Colonic mucosa (tissue), 4 donors: ENCODE measurements at regions of chr1 and their contacts with region 1.

Region 1: GRCh38 chr1:27603681-27604578 is at the start of gene AHDC1:
- DNase-seq: peak; percentile 93
- H3K4me3 ChIP-seq: peak within 1 kb of the TSS; percentile 95
- H3K27ac ChIP-seq: peak within 1 kb of the TSS; percentile 84
- H3K4me1 ChIP-seq: peaks cover 5% of the 10 kb centered on the region
- H3K27me3 ChIP-seq: no peaks in the 10 kb centered on the region
- CTCF ChIP-seq: no peak
- total RNA-seq, gene AHDC1: 18.4 to 26.8 TPM

Region 2: DNA sequence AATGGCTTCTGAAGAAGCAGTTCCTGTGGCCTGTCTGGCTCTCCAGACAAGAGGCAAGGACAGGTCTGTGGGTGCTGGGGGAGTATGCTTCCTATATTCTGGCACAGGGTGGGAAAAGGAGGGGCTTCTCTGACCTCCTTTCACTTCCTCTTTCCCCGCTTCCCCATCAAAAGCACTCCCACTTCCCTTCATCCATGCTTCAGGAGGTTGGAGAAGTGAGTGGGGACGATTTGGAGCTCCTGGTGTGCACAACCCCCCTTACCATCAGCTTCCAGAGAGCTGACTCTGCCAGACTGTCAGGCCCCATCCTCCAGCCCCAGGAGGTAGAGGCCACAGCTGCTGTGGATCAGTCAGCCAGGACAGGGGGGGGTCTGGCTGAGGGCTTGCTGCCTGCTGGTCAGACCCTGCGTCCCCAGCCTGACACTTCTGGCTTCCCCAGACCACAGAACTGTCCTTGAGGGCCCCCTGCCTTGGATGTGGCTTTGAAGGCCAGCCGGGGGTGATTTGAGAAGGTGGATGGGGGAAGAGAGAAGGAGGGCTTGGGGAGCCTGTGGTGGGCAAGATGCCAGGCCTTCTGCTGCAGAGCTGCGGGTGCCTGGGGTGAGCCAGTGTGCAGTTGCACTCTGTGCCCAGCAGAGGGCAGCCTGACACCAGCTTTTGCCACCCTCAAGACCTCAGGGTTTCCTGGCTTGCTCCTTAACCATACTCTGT is 303.4 kb before region 1 on chr1:
- intact Hi-C with region 1: loop called (anchors 10 kb)
- DNase-seq: peak; percentile 83
- H3K4me3 ChIP-seq: no peak overlapping the region
- H3K27ac ChIP-seq: peak overlapping the region; percentile 70
- H3K4me1 ChIP-seq: no peaks in the 10 kb centered on the region
- H3K27me3 ChIP-seq: no peaks in the 10 kb centered on the region
- CTCF ChIP-seq: peak; percentile 99

Region 3: DNA sequence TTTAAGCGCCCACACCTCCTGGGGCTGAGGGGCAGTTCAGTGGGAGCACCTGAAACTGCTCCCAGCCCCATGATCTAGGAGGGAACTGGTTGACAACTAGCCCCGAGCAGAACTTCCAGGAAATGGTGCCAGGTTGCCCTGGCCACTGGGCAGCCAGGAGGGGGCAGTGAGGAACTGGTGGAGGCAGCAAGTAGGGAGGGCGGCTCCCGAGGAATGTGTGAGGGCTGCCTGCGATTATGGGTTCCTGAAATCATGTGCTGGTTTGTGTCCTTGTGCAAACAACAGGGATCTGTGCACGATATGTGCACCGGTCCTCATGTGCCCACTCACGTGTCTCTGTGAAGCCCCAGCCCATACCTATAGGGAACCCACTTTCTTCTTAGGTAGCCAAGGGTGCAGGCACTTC is 201.6 kb before region 1 on chr1:
- intact Hi-C with region 1: loop called (anchors 5 kb)
- DNase-seq: peak; percentile 83
- H3K4me3 ChIP-seq: no peak overlapping the region
- H3K27ac ChIP-seq: peak overlapping the region; percentile 42
- H3K4me1 ChIP-seq: no peaks in the 10 kb centered on the region
- H3K27me3 ChIP-seq: no peaks in the 10 kb centered on the region
- CTCF ChIP-seq: peak; percentile 54

Region 4: GRCh38 chr1:27416387-27417111 is 187.4 kb before region 1 on chr1:
- intact Hi-C with region 1: loop called (anchors 5 kb)
- DNase-seq: peak; percentile 56
- H3K4me3 ChIP-seq: no peak overlapping the region
- H3K27ac ChIP-seq: no peak overlapping the region
- H3K4me1 ChIP-seq: no peaks in the 10 kb centered on the region
- H3K27me3 ChIP-seq: no peaks in the 10 kb centered on the region
- CTCF ChIP-seq: peak; percentile 64

Region 5: DNA sequence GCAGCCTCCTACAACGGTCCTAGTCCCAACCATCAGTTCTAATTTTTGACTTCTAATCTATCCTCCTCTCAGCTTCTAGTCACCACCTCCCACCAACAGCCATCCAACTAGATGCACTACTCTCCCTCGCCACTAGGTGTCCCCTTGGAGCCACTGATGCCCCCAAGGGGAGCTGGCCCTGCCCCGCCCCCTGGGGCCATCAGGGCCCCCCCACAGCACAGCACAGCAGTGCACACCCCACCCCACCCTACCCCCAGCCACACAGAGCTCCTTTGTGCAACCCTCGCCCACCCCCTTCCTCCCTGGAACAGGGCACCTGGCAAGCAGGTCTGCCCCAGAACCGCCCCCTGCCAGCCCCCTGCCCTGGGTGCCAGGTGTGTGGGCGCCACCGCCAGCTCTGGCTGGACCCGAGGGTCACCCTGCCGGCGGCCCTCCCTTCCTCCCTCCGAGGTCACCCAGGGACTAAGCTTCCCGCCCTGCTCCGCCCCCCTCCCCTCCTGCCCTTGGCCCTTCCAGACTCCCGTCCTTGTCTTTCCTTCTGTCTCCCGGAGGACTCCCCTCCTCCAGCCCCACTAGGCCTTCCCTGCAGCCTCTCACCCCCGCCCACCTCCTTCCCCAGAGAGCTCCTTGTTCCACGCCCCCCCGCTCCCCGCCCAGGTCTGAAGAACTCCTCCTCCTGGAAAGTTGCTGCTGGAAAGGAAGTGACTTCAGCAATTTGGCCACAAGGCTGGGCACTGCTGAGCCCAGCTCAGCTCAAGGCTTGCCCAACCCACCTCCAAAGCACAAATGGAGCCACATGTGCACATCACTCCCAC is 46.9 kb before region 1 on chr1:
- intact Hi-C with region 1: loop called (anchors 2 kb)
- DNase-seq: peak; percentile 96
- H3K4me3 ChIP-seq: no peak overlapping the region
- H3K27ac ChIP-seq: peak overlapping the region; percentile 85
- H3K4me1 ChIP-seq: peaks cover 12% of the 10 kb centered on the region
- H3K27me3 ChIP-seq: no peaks in the 10 kb centered on the region
- CTCF ChIP-seq: peak; percentile 96